ENCODE measurements at regions of chr1 and their contacts with region 1.

Region 1: GRCh38 chr1:210342986-210343780 is 14.5 kb downstream of the HHAT start:
- DNase-seq: peak; percentile 90
- ATAC-seq: peak; percentile 90
- H3K4me3 ChIP-seq: peak overlapping the region; percentile 30 to 76 (median 52)
- H3K4me3 Mint-ChIP-seq: no peak overlapping the region
- H3K27ac ChIP-seq: peak overlapping the region; percentile 80 to 82
- H3K27ac Mint-ChIP-seq: no peak overlapping the region
- H3K4me1 ChIP-seq: peaks cover 29 to 30% of the 10 kb centered on the region in 2 donors
- H3K4me1 Mint-ChIP-seq: peaks cover 35% of the 10 kb centered on the region
- H3K27me3 ChIP-seq: no peaks in the 10 kb centered on the region
- H3K27me3 Mint-ChIP-seq: no peaks in the 10 kb centered on the region
- CTCF ChIP-seq: no peak

Region 2: DNA sequence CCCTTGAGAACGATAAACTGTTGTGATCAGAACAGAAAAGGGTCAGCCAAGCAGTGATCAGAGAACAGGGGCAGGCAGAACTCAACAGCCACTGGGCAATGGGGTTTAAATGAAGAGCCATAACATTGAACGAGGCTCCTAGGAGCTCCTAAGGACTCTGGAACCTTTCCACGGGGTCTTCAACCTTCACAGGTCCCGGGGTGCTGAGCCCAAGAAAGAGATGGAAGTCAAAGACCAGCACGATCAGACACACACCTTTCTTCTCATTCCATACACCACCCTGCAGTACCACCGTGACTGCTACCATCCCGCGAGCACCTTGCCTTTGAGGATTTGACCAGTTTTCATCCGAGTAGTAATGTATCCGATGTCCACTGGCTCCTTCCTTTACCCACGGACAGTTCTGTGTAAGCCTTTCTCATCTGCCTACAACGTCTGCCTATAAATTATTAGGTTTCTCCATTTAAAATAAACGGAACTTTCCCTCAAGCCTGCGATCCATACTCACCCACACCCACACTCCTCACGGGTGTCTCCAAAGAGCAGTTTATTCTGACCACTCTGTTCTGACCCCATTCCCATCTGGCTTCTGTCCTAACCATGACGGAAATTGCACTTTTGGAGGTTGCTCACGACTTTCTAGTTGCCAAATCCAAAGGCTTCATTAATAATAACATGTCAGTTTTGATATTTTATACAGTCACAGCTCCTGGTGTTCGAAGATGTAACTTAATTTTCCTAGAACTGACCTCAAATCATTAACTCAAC is 31.3 kb before region 1 on chr1:
- CTCF ChIA-PET with region 1: interaction called, 4 read pairs
- POLR2A ChIA-PET with region 1: no interaction called
- intact Hi-C with region 1: loop called (anchors 5 kb)
- DNase-seq: no peak
- ATAC-seq: no peak
- H3K4me3 ChIP-seq: peak overlapping the region in 3 of 5 experiments; percentile 42 to 66 (median 55)
- H3K4me3 Mint-ChIP-seq: peak overlapping the region; percentile 85
- H3K27ac ChIP-seq: no peak overlapping the region
- H3K27ac Mint-ChIP-seq: no peak overlapping the region
- H3K4me1 ChIP-seq: peaks cover 3 to 13% of the 10 kb centered on the region in 2 donors
- H3K4me1 Mint-ChIP-seq: peaks cover 6% of the 10 kb centered on the region
- H3K27me3 ChIP-seq: peaks cover 0 to 2% (median 0%) of the 10 kb centered on the region in 4 experiments
- H3K27me3 Mint-ChIP-seq: peaks cover 17% of the 10 kb centered on the region
- CTCF ChIP-seq: no peak

Region 3: DNA sequence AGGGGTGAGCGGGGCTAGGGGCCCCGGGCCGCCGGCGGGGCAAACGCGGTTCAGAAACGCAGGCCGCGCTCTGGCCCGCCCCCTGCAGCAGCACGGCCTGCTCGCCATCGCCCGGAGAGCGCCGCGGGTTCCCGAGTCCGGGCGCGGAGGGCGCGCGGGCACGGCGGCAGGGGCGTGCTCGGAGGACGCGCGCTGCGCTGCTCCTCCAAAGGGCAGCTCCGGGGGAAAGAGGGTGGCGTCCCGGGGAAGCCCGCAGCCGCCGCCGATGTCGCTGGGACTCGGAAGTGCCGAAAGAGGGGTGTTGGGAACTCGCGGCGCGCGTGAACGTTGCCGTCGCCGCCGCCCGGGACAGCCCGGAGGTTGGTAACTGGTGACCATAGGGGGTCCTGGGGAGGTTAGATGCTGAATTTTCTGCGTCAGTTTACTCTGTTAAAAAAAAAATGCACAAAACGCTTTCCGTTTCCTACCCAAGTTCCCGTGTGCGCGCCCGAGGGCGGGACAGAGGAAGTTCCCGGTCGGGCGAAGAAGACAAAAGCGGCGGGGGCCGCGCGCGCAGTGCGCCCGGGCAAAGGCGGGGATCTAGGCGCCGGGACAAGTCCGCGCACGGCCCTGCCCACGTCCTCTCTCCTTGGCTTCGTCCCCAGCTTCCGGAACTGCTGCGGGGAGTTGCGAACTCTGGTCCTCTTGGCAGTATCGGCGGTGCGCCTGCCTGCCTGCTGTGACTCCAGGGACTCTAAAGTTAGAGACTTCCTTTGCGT is 14.3 kb before region 1 on chr1 and contains the start of gene HHAT:
- CTCF ChIA-PET with region 1: interaction called, 41 read pairs
- POLR2A ChIA-PET with region 1: interaction called, 10 read pairs
- intact Hi-C with region 1: loop called (anchors 1 kb)
- DNase-seq: peak; percentile 75
- ATAC-seq: peak; percentile 70
- H3K4me3 ChIP-seq: peak within 1 kb of the TSS; percentile 52 to 89 (median 87)
- H3K4me3 Mint-ChIP-seq: peak within 1 kb of the TSS; percentile 94
- H3K27ac ChIP-seq: peak within 1 kb of the TSS; percentile 54 to 64
- H3K27ac Mint-ChIP-seq: peak within 1 kb of the TSS; percentile 90
- H3K4me1 ChIP-seq: peaks cover 16 to 25% of the 10 kb centered on the region in 2 donors
- H3K4me1 Mint-ChIP-seq: peaks cover 39% of the 10 kb centered on the region
- H3K27me3 ChIP-seq: peaks cover 0 to 2% (median 0%) of the 10 kb centered on the region in 4 experiments
- H3K27me3 Mint-ChIP-seq: peaks cover 12% of the 10 kb centered on the region
- CTCF ChIP-seq: no peak
- total RNA-seq, gene HHAT: 26.7 and 28.2 TPM in 2 replicates

Region 4: GRCh38 chr1:210360852-210361477 is 17.8 kb after region 1 on chr1:
- CTCF ChIA-PET with region 1: interaction called, 14 read pairs
- POLR2A ChIA-PET with region 1: no interaction called
- intact Hi-C with region 1: loop called (anchors 2 kb)
- DNase-seq: peak; percentile 23
- ATAC-seq: peak; percentile 43
- H3K4me3 ChIP-seq: no peak overlapping the region
- H3K4me3 Mint-ChIP-seq: no peak overlapping the region
- H3K27ac ChIP-seq: no peak overlapping the region
- H3K27ac Mint-ChIP-seq: no peak overlapping the region
- H3K4me1 ChIP-seq: no peaks in the 10 kb centered on the region
- H3K4me1 Mint-ChIP-seq: no peaks in the 10 kb centered on the region
- H3K27me3 ChIP-seq: no peaks in the 10 kb centered on the region
- H3K27me3 Mint-ChIP-seq: no peaks in the 10 kb centered on the region
- CTCF ChIP-seq: no peak

Region 5: GRCh38 chr1:211258756-211259637 is 915.8 kb after region 1 on chr1 and contains the start of gene RCOR3:
- CTCF ChIA-PET with region 1: no interaction called
- POLR2A ChIA-PET with region 1: no interaction called
- intact Hi-C with region 1: loop called (anchors 5 kb)
- DNase-seq: peak; percentile 93
- ATAC-seq: peak; percentile 74
- H3K4me3 ChIP-seq: peak within 1 kb of the TSS; percentile 81 to 93 (median 90)
- H3K4me3 Mint-ChIP-seq: peak within 1 kb of the TSS; percentile 92
- H3K27ac ChIP-seq: peak within 1 kb of the TSS; percentile 88 to 90
- H3K27ac Mint-ChIP-seq: peak within 1 kb of the TSS; percentile 96
- H3K4me1 ChIP-seq: peaks cover 11 to 16% of the 10 kb centered on the region in 2 donors
- H3K4me1 Mint-ChIP-seq: peaks cover 15% of the 10 kb centered on the region
- H3K27me3 ChIP-seq: no peaks in the 10 kb centered on the region
- H3K27me3 Mint-ChIP-seq: no peaks in the 10 kb centered on the region
- CTCF ChIP-seq: peak; percentile 84
- total RNA-seq, gene RCOR3: 120 and 124 TPM in 2 replicates

Region 6: DNA sequence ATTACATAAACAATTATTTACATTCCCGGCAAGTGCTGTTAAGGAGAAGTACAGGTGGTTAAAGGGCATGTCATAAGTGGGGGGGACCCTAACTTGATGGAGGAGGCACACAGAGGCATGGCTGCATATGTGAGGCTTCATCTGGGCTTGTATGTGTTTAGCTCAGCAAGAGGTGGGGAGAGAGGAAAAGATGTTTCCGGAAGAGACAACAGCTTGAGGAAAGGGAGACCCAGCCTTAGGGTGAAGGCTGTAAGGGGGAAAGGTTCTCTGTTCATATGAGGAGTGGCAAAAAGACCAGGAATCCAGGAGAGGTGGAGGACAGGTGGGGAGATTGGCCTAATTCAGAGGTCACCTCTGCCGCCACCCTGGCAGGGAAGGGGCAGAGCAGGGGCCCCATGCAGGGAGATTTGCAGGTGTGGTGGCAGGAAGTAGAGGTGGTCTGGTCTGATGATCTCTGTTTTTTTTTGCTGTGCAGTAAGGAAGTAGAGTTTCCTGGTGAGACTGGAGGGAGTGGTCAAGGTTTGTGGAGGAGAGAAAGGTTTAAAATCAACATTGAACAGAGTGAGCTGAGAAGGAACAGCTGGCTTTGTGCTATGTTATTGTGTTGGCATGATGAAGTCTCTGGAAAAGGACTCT is 992.5 kb after region 1 on chr1:
- CTCF ChIA-PET with region 1: no interaction called
- POLR2A ChIA-PET with region 1: no interaction called
- intact Hi-C with region 1: loop called (anchors 10 kb)
- DNase-seq: peak; percentile 80
- ATAC-seq: peak; percentile 85
- H3K4me3 ChIP-seq: peak overlapping the region; percentile 17 to 54 (median 39)
- H3K4me3 Mint-ChIP-seq: peak overlapping the region; percentile 62
- H3K27ac ChIP-seq: peak overlapping the region; percentile 90 to 92
- H3K27ac Mint-ChIP-seq: peak overlapping the region; percentile 84
- H3K4me1 ChIP-seq: peaks cover 98 to 100% of the 10 kb centered on the region in 2 donors
- H3K4me1 Mint-ChIP-seq: peaks cover 92% of the 10 kb centered on the region
- H3K27me3 ChIP-seq: no peaks in the 10 kb centered on the region
- H3K27me3 Mint-ChIP-seq: no peaks in the 10 kb centered on the region
- CTCF ChIP-seq: no peak